ENCODE measurements at regions of chr19 and their contacts with region 1.

Region 1: GRCh38 chr19:51904331-51905165 is at the start of gene ZNF649:
- DNase-seq: peak; percentile 90
- H3K4me3 Mint-ChIP-seq: peak within 1 kb of the TSS; percentile 96
- H3K27ac Mint-ChIP-seq: peak within 1 kb of the TSS; percentile 98
- H3K4me1 Mint-ChIP-seq: peaks cover 19% of the 10 kb centered on the region
- H3K27me3 Mint-ChIP-seq: peaks cover 22% of the 10 kb centered on the region
- total RNA-seq, gene ZNF649: 10.4 to 11.6 TPM

Region 2: DNA sequence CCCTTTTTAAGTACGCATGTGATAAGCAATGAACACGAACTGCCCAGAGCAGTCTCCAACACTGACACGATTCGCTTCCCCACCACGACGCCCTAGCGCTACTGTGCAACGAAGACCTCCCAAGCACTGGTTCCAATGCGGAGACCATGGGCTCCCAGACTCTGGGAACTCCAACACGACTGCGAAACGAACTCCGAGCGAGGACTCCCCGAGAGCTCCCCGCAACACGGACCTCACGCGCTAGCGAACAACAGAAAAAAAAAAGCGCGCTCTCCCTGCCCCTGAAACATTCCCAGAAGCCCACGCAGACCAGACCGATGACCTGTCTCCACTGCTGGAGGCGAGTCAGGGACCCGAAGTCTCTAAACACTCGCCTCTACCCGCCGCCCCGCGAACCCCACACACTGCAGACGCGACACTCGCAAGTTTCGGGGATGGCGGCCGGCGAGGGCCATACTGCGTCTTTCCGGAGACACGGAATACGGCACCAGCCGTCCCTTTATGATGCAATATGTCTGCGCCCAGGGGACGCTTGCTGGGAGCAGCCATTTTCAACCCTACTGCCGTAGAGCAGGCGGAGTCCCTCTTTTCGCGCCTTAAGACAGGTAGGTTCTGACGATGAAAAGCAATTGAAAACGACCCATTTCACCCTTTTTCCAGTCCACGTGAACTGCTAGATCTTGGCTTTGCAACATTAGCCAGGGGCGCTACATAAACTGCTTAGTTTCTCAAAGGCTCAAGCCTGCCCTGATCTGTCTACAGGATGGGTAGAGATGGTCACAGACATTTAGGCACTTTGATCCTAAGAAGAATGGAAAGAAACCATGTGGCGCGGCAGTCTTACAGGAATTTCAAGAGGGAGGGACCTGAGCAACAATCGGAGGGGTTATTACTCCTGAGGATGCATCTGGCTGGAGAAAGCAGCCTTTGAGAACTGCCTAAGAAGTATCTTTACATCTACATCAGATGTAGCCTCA is 16.7 kb before region 1 on chr19 and contains the start of gene ZNF577:
- CTCF ChIA-PET with region 1: no interaction called
- intact Hi-C with region 1: loop called (anchors 2 kb)
- DNase-seq: peak; percentile 61
- H3K4me3 Mint-ChIP-seq: peak within 1 kb of the TSS; percentile 73
- H3K27ac Mint-ChIP-seq: peak within 1 kb of the TSS; percentile 13
- H3K4me1 Mint-ChIP-seq: peaks cover 3% of the 10 kb centered on the region
- H3K27me3 Mint-ChIP-seq: no peaks in the 10 kb centered on the region
- total RNA-seq, gene ZNF577: 5.4 to 5.6 TPM

Region 3: DNA sequence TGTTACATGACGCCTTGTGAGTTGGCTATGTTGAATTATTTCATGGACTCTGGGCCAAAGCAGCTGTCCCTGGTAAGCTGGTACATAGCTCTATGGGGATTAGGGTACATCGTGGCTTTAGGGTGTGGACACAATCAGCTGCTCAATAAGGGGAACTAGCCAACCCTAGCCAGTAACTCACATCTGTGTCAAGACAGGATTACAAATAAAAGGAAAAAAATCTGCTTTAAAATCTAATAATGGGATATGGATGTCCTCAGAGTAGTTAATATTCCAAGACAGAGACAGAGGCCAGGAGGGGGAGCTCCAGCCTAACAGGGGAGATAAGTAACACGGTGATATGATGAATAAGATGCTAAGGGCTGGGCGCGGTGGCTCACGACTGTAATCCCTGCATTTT is 343.7 kb after region 1 on chr19:
- CTCF ChIA-PET with region 1: no interaction called
- intact Hi-C with region 1: no loop called
- DNase-seq: peak; percentile 85
- H3K4me3 Mint-ChIP-seq: no peak overlapping the region
- H3K27ac Mint-ChIP-seq: no peak overlapping the region
- H3K4me1 Mint-ChIP-seq: no peaks in the 10 kb centered on the region
- H3K27me3 Mint-ChIP-seq: no peaks in the 10 kb centered on the region